Activated CD8-positive, alpha-beta T cell treated with anti-CD3 and anti-CD28 coated beads for 36 hours (primary cell): ENCODE measurements at regions of chr20 and their contacts with region 1.

Region 1: DNA sequence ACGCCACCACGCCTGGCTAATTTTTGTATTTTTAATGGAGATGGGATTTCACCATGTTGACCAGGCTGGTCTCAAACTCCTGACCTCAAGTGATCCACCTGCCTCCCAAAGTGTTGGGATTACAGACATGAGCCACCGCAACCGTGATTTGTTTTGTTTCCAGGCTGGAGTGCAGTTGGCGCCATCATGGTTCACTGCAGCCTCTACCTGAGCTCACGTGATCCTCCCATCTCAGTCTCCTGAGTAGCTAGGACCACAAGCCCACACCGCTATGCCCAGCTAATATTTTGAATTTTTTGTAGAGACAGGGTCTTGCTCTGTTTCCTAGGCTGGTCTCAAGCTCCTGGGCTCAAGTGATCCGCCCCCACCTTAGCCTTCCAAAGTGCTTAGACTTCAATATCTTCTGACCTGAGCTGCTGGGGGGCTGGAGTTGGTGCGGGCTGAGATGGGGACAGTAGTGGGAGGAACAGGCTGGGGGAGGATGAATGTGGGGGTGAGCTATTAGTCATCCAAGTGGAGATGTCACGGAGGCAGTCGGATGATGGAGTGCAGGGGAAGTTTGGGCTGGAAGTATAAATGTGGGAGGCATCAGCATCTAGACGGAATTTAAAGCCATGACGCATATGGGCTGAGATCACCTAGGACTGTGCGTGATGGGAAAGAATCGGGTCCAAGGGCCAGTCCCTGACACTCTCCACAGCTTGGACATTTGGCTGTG is 23.1 kb upstream of the ZMYND8 start:
- DNase-seq: no peak
- ATAC-seq: no peak
- H3K4me3 Mint-ChIP-seq: no peak overlapping the region
- H3K27ac Mint-ChIP-seq: peak overlapping the region; percentile 18
- H3K4me1 Mint-ChIP-seq: peaks cover 27% of the 10 kb centered on the region
- H3K27me3 Mint-ChIP-seq: no peaks in the 10 kb centered on the region
- CTCF ChIP-seq: no peak

Region 2: DNA sequence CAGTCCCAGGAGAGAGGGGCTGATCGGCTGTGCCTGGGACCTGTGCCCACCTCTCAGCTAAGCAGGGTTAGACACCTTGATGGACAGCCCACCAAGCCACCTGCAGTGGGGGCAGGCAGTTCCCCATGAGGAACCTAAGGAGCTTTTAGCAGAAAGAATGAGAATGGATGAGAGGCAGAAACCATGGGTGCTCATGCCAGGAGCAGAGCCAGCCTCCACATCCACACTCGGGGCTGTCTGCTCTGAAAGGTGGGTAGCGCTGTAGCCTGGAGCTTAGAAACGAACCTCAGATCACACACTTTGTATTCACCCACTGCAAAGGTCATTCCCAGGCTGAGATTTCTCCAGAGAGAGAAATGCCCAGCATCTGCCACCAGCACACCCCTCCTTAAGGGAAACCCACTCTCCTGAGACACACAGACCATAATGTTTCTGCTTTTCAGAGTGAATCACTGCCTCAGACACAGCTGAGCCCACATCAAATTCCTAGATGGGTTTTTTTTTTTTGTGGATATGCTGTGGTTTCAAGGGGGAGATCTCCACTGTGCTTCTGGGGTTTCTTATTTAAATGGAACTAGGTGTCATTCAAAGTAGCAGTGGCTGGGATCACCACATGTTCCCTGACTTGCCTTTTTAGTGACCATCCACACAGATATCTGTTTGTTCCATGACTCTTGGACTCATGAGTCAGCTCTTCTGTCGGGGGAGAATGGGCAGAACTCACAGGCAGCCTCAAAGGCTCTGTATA is 266.1 kb before region 1 on chr20:
- CTCF ChIA-PET with region 1: no interaction called
- POLR2A ChIA-PET with region 1: no interaction called
- intact Hi-C with region 1: no loop called
- DNase-seq: no peak
- ATAC-seq: no peak
- H3K4me3 Mint-ChIP-seq: no peak overlapping the region
- H3K27ac Mint-ChIP-seq: no peak overlapping the region
- H3K4me1 Mint-ChIP-seq: no peaks in the 10 kb centered on the region
- H3K27me3 Mint-ChIP-seq: peaks cover 5% of the 10 kb centered on the region
- CTCF ChIP-seq: no peak

Region 3: DNA sequence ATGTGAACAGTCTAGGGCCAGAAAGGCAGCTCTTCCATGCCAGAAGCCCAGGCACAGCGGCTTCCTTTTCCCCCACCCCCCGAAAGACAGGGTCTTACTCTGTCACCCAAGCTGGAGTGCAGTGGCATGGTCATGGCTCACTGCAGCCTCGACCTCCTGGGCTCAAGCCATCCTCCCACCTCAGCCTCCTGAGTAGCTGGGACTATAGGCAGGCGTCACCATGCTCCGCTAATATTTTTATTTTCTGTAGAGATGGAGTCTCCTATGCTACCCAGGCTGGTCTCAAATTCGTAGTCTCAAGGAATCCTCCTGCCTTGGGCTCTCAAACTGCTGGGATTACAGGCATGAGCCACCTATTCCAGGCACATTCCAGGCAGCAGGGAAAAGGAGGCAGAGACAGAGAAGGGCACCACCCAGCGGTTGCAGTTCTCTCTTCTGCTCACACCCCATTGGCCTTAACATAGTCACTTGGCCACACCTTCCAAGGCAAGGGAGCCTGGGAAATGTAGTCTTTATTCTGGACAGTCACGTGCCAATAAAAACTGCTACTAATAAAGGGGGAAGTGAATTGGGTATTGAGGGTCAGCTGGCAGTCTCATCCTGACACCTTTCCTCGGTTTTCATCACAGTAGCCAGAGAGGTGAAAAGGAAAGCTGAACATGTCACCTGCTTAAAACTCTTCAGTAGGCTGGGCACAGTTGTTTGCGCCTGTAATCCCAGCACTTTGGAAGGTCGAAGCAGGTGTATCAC is 229.0 kb before region 1 on chr20:
- CTCF ChIA-PET with region 1: no interaction called
- POLR2A ChIA-PET with region 1: no interaction called
- intact Hi-C with region 1: no loop called
- DNase-seq: peak; percentile 42
- ATAC-seq: peak; percentile 75
- H3K4me3 Mint-ChIP-seq: no peak overlapping the region
- H3K27ac Mint-ChIP-seq: no peak overlapping the region
- H3K4me1 Mint-ChIP-seq: no peaks in the 10 kb centered on the region
- H3K27me3 Mint-ChIP-seq: peaks cover 4% of the 10 kb centered on the region
- CTCF ChIP-seq: peak; percentile 39

Region 4: DNA sequence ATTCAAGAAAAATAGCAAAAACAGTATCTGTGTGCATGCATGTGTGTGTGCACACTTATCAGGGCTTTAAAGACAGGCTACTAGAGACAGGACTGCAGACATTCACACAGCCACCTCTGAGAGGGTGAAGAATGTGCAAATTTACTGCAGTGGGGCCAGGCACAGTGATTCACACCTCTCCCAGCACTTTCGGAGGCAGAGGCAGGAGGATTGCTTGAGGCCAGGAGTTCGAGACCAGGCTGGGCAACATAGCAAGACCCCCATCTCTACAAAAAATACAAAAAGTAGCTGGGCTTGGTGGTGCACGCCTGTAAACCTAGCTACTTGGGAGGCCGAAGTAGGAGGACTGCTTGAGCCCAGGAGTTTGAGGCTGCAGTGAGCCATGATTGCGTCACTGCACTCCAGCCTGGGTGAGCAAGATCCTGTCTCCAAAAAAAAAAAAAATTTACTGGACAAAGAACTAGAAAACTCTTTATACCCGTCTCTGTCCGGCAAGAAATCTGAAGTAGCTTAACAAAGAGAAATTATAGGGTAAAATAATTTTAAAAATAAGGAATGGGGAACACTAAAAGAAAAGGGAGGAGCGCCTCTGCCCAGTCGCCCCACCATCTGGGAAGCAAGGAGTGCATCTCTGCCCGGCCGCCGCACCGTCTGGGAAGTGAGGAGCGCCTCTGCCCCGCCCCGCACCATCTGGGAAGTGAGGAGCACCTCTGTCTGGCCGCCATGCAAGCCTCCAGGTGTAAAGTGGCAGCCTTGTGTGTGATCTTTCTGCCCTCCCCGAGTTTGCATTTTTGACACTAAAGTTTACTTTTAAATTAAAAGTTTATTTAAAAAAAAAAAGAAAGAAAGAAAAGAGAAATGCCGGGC is 128.2 kb before region 1 on chr20:
- CTCF ChIA-PET with region 1: interaction called, 17 read pairs
- POLR2A ChIA-PET with region 1: interaction called, 3 read pairs
- intact Hi-C with region 1: no loop called
- DNase-seq: no peak
- ATAC-seq: no peak
- H3K4me3 Mint-ChIP-seq: no peak overlapping the region
- H3K27ac Mint-ChIP-seq: no peak overlapping the region
- H3K4me1 Mint-ChIP-seq: peaks cover 4% of the 10 kb centered on the region
- H3K27me3 Mint-ChIP-seq: no peaks in the 10 kb centered on the region
- CTCF ChIP-seq: no peak

Region 5: GRCh38 chr20:47304287-47304686 is 75.3 kb before region 1 on chr20:
- CTCF ChIA-PET with region 1: interaction called, 12 read pairs
- POLR2A ChIA-PET with region 1: no interaction called
- intact Hi-C with region 1: no loop called
- DNase-seq: no peak
- ATAC-seq: no peak
- H3K4me3 Mint-ChIP-seq: no peak overlapping the region
- H3K27ac Mint-ChIP-seq: peak overlapping the region; percentile 29
- H3K4me1 Mint-ChIP-seq: peaks cover 46% of the 10 kb centered on the region
- H3K27me3 Mint-ChIP-seq: no peaks in the 10 kb centered on the region
- CTCF ChIP-seq: no peak

Region 6: GRCh38 chr20:47356526-47357295 is 22.9 kb before region 1 on chr20 and contains the start of gene ZMYND8:
- CTCF ChIA-PET with region 1: interaction called, 151 read pairs
- POLR2A ChIA-PET with region 1: interaction called, 7 read pairs
- intact Hi-C with region 1: no loop called
- DNase-seq: peak; percentile 95
- ATAC-seq: peak; percentile 88
- H3K4me3 Mint-ChIP-seq: peak within 1 kb of the TSS; percentile 97
- H3K27ac Mint-ChIP-seq: peak within 1 kb of the TSS; percentile 95
- H3K4me1 Mint-ChIP-seq: peaks cover 42% of the 10 kb centered on the region
- H3K27me3 Mint-ChIP-seq: no peaks in the 10 kb centered on the region
- CTCF ChIP-seq: no peak
- total RNA-seq, gene ZMYND8: 31.9 to 33.4 TPM

Region 7: DNA sequence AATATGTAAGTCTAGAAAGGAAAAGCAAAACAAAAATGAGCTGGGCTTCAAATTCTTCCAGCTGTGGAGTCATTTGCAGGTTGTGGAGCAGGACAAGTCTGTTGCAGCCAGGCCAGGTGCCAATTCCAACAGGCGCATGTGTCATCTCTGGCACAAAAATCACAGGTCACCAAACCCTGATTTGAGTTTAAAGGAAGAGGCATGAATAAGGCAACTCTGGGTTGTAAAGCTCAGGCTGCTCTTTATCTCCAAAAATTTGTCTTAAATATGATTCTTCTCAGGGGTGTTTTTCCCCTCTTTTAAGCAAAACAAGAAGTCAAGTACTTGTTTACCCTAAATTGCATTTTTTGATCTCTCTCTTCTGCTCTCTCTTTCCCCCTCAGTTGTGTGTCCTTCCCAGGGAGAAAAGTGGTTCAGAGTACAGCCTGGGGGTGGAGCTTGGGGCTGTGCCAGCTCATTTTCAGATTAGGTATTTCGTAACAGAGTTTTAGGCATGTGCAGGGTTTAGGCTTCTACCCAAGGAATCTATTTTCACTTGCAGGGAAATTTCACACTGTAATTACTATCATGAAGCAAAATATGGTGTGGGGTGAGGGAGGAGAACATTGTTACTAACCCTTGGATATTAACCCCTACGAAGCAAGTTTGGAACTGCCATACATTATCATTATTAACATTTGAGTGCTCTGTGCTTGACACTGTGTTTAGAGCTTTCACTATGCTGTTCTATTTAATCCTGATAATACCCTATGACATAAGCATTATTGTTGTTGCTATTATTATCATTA is 113.8 kb after region 1 on chr20:
- CTCF ChIA-PET with region 1: interaction called, 10 read pairs
- POLR2A ChIA-PET with region 1: no interaction called
- intact Hi-C with region 1: no loop called
- DNase-seq: peak; percentile 83
- ATAC-seq: peak; percentile 60
- H3K4me3 Mint-ChIP-seq: peak overlapping the region; percentile 38
- H3K27ac Mint-ChIP-seq: peak overlapping the region; percentile 77
- H3K4me1 Mint-ChIP-seq: peaks cover 60% of the 10 kb centered on the region
- H3K27me3 Mint-ChIP-seq: no peaks in the 10 kb centered on the region
- CTCF ChIP-seq: no peak

Region 8: GRCh38 chr20:47620808-47621805 is 241.5 kb after region 1 on chr20:
- CTCF ChIA-PET with region 1: interaction called, 39 read pairs
- POLR2A ChIA-PET with region 1: no interaction called
- intact Hi-C with region 1: no loop called
- DNase-seq: peak; percentile 21
- ATAC-seq: peak; percentile 58
- H3K4me3 Mint-ChIP-seq: no peak overlapping the region
- H3K27ac Mint-ChIP-seq: peak overlapping the region; percentile 71
- H3K4me1 Mint-ChIP-seq: peaks cover 37% of the 10 kb centered on the region
- H3K27me3 Mint-ChIP-seq: no peaks in the 10 kb centered on the region
- CTCF ChIP-seq: peak; percentile 95